PC-9 (cell line): ENCODE measurements at regions of chr6 and their contacts with region 1.

Region 1: DNA sequence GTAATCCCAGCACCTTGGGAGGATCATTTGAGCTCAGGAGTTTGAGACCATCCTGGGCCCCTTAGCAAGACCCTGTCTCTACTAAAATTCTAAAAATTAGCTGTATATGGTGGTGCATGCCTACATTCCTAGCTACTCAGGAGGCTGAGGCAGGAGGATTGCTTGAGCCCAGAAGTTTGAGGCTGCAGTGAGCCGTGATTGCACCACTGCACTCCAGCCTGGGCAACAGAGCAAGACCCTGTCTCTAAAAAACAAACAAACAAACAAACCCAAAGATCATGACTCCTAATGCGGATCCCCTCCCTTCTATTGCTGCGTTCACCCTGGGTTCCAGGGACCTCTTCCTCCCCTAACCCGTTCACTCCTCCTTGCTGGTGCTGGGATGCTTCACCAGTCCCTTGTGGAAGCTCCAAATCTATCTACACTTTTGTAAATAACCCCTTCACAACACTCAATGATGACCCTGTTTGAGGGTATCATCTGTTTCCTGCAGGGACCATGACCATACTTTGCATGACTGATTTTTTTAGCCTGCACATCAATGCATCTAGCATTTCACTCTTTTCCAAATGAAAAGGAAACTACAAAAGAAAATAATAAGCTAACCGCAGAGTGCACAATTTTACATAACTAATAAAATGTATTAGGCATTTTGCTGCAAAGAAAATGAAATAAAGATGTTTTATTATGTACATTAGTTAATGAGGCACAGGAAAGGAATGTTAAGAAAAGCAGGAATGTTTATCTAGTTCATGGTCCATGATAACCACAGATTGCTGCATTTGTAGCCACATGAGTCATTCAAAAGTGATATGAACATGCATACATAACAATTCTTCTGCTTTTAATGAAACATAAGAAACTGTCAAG is 30.5 kb upstream of the IPCEF1 start:
- DNase-seq: peak in 1 of 2 experiments; percentile 89
- H3K4me3 ChIP-seq: no peak overlapping the region
- H3K27ac ChIP-seq: no peak overlapping the region
- H3K4me1 ChIP-seq: peaks cover 25% of the 10 kb centered on the region
- H3K27me3 ChIP-seq: no peaks in the 10 kb centered on the region
- CTCF ChIP-seq: no peak

Region 2: GRCh38 chr6:154292890-154293398 is 94.1 kb before region 1 on chr6:
- CTCF ChIA-PET with region 1: no interaction called
- POLR2A ChIA-PET with region 1: interaction called, 11 read pairs
- intact Hi-C with region 1: no loop called
- DNase-seq: peak; percentile 7 to 94
- H3K4me3 ChIP-seq: peak overlapping the region; percentile 44; the same call in 1 of the 2 replicates
- H3K27ac ChIP-seq: peak overlapping the region; percentile 94
- H3K4me1 ChIP-seq: peaks cover 51% of the 10 kb centered on the region
- H3K27me3 ChIP-seq: no peaks in the 10 kb centered on the region
- CTCF ChIP-seq: no peak

Region 3: DNA sequence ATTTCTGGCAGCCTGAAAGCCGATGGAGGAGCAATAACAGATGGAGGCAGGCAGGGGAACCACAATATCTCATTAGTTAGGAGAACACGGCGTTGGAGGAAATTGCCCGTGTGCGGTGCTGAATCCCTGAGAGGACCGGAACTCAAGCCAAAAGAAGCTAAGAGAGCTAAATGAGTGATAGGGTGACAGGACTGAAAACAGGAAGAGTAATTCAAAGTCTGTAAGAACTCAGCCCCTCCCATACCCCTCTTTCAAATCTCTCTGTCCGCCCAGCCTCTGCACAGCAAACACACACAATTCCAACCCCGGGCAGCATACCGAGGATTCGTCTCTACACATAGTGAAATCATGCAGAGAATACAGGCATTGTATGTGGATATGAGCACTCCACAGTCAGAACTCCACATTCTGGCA is 27.9 kb before region 1 on chr6:
- CTCF ChIA-PET with region 1: no interaction called
- POLR2A ChIA-PET with region 1: no interaction called
- intact Hi-C with region 1: no loop called
- DNase-seq: no peak
- H3K4me3 ChIP-seq: no peak overlapping the region
- H3K27ac ChIP-seq: no peak overlapping the region
- H3K4me1 ChIP-seq: no peaks in the 10 kb centered on the region
- H3K27me3 ChIP-seq: no peaks in the 10 kb centered on the region
- CTCF ChIP-seq: no peak

Region 4: DNA sequence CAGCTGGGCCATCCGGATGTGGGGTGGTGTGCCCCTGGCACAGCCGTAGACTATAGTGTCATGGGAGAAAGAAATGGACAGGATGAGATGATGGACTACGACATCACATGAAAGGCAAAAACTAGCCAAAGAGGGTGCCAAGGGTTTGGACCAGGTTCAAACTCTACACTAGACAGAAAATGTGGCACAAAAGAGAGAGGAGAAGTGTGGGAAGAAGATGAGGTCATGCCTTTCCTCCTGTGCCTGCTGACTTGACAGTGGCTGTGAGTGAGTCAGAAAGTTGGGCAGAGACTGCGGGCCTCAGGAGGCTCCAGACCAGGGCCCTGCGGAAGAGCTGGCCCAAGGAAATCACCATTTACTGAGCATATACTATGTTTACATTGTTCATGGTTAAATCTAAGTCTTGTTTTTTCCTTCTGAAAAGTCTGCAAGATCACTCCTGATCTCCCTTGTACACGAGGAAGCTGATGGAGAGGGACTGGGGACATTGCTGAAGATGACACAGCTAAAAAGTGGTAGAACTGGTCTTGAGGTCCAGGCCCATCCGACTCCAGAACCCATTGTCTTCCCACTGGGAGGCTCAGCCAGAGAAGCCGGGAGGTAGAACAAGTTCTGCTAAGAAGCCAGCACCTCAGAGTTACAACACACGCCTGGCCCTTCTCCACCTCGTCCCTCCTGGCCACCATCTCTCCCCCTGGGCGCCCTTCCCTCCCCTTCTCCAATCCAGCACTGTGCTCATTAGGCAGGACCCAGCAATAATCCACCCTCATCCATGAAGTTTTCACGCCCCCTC is 87.7 kb after region 1 on chr6:
- CTCF ChIA-PET with region 1: no interaction called
- POLR2A ChIA-PET with region 1: no interaction called
- intact Hi-C with region 1: loop called (anchors 10 kb)
- DNase-seq: peak; percentile 41 to 43
- H3K4me3 ChIP-seq: no peak overlapping the region
- H3K27ac ChIP-seq: 0 out of 2 replicates have a peak overlapping the region, but pooled peaks have one; percentile 24
- H3K4me1 ChIP-seq: peaks cover 15% of the 10 kb centered on the region
- H3K27me3 ChIP-seq: no peaks in the 10 kb centered on the region
- CTCF ChIP-seq: no peak

Region 5: DNA sequence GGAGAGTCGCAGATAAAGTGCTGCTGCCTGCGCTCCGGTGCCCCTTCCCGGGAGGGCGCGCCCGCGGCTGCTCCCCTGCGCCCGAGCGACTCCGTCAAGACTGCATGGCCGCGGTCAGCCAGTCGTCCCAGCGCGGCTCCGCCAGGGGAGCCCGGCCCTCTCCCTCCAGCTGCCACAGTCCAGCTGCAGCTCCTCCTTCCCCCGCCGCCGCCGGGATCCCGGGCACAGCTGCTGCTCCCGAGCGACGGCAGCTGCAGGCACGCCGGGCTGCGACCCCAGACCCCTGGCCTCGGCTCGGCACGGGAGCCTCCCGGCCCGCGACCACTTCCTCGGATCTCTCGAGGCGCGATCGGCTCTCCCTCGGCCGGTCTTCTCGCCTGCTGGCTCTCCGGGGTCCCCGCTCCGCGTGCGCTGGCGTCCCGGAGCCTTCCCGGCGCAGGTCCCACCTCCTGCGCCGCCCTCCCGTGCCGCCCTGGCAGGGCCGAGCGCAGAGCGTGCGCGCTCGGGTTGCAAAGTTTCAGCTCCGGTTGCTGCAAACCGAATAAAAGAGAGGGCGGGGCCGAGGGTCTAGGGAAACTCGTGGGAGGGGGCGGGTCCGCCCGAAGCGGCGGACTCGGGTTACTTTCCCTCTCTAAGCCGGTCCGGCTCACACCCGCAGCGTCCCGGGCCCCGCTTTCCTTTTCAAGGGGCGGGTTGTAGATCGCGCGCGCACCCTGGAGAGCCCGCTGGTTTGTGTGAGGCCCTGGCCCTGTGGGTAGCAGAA is 123.2 kb after region 1 on chr6 and contains the start of gene CNKSR3:
- CTCF ChIA-PET with region 1: no interaction called
- POLR2A ChIA-PET with region 1: no interaction called
- intact Hi-C with region 1: loop called (anchors 10 kb)
- DNase-seq: peak; percentile 71 to 80
- H3K4me3 ChIP-seq: peak within 1 kb of the TSS; percentile 94
- H3K27ac ChIP-seq: peak within 1 kb of the TSS; percentile 66
- H3K4me1 ChIP-seq: peaks cover 23% of the 10 kb centered on the region
- H3K27me3 ChIP-seq: no peaks in the 10 kb centered on the region
- CTCF ChIP-seq: no peak
- total RNA-seq, gene CNKSR3: 3.4 and 4.7 TPM in 2 replicates

Region 6: GRCh38 chr6:155314092-155314772 is 927.1 kb after region 1 on chr6 and contains the start of gene TFB1M:
- CTCF ChIA-PET with region 1: interaction called, 11 read pairs
- POLR2A ChIA-PET with region 1: no interaction called
- intact Hi-C with region 1: no loop called
- DNase-seq: peak; percentile 95
- H3K4me3 ChIP-seq: peak within 1 kb of the TSS; percentile 85
- H3K27ac ChIP-seq: peak within 1 kb of the TSS; percentile 77
- H3K4me1 ChIP-seq: peaks cover 30% of the 10 kb centered on the region
- H3K27me3 ChIP-seq: no peaks in the 10 kb centered on the region
- CTCF ChIP-seq: no peak
- total RNA-seq, gene TFB1M: 17.7 and 19.5 TPM in 2 replicates